ENCODE measurements at regions of chr9 and their contacts with region 1.

Region 1: DNA sequence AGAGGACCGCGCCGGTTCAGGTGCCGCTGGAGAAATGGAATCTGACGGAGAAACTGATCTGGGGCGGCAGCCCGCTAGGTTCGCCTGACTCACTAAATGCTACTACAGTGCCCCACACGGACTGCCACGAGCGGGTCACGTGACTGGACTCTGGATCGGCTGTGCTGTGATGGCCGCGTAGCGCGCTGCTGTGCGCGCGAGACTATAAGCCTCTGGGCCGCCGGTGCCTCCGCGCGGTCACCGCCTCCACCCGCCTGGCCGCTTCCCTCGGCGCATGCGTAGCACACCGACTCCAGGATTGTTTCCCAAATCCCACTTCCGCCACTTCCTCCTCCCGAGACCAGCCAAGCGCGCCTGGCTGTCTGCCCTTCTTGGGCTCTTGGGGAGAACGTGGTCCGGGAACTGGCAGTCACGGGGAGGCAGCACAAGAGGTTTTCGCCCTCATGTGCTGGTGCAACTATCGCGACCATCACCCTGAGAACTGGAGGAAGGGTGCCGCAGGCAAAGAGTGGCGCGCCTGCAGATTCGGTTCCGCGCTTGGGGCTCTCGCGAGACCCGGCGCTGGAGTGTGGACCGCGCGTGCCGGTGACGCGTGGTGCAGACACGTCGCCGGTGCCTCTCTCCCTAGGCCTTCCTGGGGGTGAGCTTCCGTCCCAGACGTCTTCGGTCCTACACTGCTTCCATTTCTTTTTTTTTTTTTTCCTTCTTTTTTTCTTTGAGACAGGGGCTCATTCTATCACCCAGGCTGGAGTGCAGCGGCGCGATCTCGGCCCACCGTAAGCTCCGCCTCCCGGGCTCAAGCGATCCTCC is 35.8 kb upstream of the GLDC start:
- DNase-seq: peak; percentile 95
- H3K4me3 Mint-ChIP-seq: peak overlapping the region; percentile 96
- H3K27ac Mint-ChIP-seq: peak overlapping the region; percentile 100
- H3K4me1 Mint-ChIP-seq: peaks cover 19% of the 10 kb centered on the region
- H3K27me3 Mint-ChIP-seq: no peaks in the 10 kb centered on the region

Region 2: DNA sequence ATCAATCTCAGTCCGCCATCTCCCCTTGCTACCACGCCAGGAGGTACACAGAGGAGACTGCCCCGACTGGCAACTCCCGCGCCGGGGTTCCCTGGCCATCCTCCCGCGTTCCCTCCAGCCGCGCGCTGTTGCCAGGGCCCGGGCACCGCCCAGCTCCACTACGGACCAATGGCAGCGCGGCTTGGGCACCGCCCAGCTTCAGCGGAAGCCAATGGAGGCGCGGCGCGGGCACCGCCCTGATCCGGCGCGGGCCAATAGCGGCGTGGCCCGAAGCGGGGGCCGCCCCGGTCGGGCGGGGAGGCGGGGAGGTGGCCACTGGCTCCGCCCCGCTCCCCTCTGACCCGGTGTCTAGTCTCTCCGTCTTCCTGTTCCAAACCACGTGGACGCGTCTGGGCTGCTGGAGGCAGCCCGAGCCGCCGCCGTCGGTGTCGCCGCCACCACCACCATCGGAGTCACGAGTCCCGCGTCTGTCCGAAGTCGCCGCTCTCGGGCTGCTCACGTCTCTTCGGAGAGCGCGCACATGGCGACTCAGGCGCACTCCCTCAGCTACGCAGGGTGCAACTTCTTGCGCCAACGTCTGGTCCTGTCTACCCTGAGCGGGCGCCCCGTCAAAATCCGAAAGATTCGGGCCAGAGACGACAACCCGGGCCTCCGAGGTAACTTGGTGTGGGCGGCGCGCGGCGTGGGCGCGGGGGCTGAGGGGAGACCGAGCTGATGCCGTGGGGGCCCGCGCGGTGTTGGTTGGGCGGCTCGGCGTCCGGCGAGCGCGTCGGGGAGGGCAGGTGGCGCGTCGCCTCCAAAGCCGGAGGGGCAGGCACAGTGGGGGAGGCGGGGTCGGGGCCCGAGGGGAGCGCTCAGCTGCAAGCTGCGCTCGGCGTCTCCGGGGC is 1888.5 kb before region 1 on chr9 and contains the start of gene RCL1:
- CTCF ChIA-PET with region 1: no interaction called
- POLR2A ChIA-PET with region 1: no interaction called
- intact Hi-C with region 1: loop called (anchors 5 kb)
- DNase-seq: peak; percentile 98
- H3K4me3 Mint-ChIP-seq: peak within 1 kb of the TSS; percentile 93
- H3K27ac Mint-ChIP-seq: peak within 1 kb of the TSS; percentile 86
- H3K4me1 Mint-ChIP-seq: peaks cover 49% of the 10 kb centered on the region
- H3K27me3 Mint-ChIP-seq: no peaks in the 10 kb centered on the region
- total RNA-seq, gene RCL1: 26.0 to 28.2 TPM

Region 3: GRCh38 chr9:6008169-6008979 is 673.0 kb before region 1 on chr9:
- CTCF ChIA-PET with region 1: no interaction called
- POLR2A ChIA-PET with region 1: no interaction called
- intact Hi-C with region 1: loop called (anchors 1 kb)
- DNase-seq: peak; percentile 97
- H3K4me3 Mint-ChIP-seq: peak overlapping the region; percentile 74
- H3K27ac Mint-ChIP-seq: peak overlapping the region; percentile 79
- H3K4me1 Mint-ChIP-seq: peaks cover 56% of the 10 kb centered on the region
- H3K27me3 Mint-ChIP-seq: no peaks in the 10 kb centered on the region

Region 4: GRCh38 chr9:6412487-6413364 is 268.6 kb before region 1 on chr9 and contains the start of gene UHRF2:
- CTCF ChIA-PET with region 1: interaction called, 4 read pairs
- POLR2A ChIA-PET with region 1: interaction called, 23 read pairs
- intact Hi-C with region 1: loop called (anchors 1 kb)
- DNase-seq: peak; percentile 100
- H3K4me3 Mint-ChIP-seq: peak within 1 kb of the TSS; percentile 80
- H3K27ac Mint-ChIP-seq: peak within 1 kb of the TSS; percentile 94
- H3K4me1 Mint-ChIP-seq: peaks cover 26% of the 10 kb centered on the region
- H3K27me3 Mint-ChIP-seq: no peaks in the 10 kb centered on the region
- total RNA-seq, gene UHRF2: 59.5 to 62.9 TPM

Region 5: DNA sequence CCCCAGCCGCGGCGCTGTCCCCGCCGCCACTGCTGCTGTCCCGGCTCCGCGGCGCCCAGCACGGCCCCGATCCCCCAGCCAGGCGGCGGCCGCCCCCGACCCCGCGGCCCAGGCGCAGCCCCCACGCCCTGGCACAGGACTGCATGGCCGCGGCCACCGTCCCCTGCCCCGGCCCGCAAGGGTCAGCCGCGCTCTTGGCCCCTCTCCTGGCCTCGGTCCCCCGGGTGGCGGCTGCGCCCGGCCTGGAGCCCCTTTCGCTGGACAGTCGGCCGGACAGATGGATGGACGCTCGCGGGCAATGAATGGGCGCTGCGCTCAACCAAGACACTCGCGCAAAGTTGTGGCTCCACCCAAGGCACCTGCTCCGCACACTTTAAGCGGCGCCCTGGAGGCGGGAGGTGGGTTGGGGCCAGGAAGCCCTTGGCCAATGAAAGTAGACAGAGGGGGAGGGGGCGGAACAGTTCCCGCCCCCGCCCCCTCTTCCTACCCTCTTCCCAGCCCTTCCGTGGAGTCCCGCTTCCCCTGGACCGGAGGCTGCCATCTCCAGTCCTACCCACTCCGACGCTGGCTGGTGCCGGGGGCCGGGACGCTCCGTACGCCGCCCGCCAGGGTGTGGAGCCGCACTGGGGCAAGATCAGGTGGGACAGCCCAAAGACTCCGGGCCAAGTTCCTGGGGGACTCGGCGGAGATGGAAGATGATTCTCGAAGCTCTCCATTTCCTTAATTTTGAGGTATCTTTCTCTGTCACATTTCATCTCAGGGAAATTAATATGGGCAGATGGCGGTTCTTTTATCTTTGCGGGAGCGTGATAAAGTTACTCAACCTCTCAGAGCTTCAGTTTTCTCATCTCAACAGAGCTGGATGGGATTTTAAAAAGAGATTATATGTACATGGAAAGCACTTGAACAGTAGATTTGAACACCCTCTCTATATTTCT is 35.7 kb before region 1 on chr9 and contains the start of gene GLDC:
- CTCF ChIA-PET with region 1: interaction called, 3 read pairs
- POLR2A ChIA-PET with region 1: interaction called, 4 read pairs
- intact Hi-C with region 1: loop called (anchors 1 kb)
- DNase-seq: peak; percentile 62
- H3K4me3 Mint-ChIP-seq: peak within 1 kb of the TSS; percentile 79
- H3K27ac Mint-ChIP-seq: no peak within 1 kb of the TSS
- H3K4me1 Mint-ChIP-seq: peaks cover 17% of the 10 kb centered on the region
- H3K27me3 Mint-ChIP-seq: peaks cover 38% of the 10 kb centered on the region
- total RNA-seq, gene GLDC: 7.1 to 9.9 TPM

Region 6: DNA sequence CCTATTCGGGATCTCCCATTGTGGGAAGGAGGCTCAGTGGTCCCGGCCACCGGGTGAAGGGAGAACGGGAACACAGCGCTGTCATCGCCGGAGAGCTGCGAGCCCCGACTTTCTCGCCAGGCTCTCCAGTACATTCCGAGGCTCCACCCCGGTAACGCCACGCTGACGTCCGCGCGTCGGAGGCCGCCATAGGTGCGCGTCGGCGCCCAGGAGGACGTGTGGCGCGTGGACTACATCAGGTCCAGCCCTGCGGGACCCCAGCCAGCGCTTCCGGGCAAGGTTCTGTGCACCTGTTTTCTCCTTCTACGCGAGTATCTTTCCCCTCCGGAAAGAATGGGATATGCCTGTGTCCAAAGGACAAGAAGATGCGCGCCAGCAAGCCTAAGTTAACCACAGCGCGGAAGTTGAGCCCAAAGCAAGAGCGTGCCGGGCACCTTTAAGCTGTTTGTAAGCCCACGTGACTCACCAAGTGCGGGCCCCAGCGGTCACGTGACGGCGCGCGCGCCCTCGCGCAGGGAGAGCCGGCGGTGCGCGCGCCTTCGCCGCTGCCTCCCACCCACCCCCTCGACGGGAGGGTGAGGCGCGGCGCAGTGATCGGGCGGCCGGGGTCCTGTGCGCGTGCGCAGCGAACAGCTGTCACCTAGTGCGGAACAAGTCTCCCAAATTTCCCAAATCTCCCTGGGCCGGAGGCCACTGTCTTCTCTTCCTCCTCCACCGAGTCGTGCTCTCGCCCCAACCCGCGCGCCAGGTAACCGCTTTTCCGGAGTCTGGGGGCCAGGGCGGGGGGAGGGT is 76.3 kb after region 1 on chr9 and contains the start of gene KDM4C:
- CTCF ChIA-PET with region 1: no interaction called
- POLR2A ChIA-PET with region 1: interaction called, 43 read pairs
- intact Hi-C with region 1: loop called (anchors 1 kb)
- DNase-seq: peak; percentile 96
- H3K4me3 Mint-ChIP-seq: peak within 1 kb of the TSS; percentile 94
- H3K27ac Mint-ChIP-seq: peak within 1 kb of the TSS; percentile 98
- H3K4me1 Mint-ChIP-seq: peaks cover 32% of the 10 kb centered on the region
- H3K27me3 Mint-ChIP-seq: no peaks in the 10 kb centered on the region
- total RNA-seq, gene KDM4C: 26.2 to 28.8 TPM